Prostate gland (tissue), 2 donors: ENCODE measurements at regions of chr17 and their contacts with region 1.

Region 1: GRCh38 chr17:48024937-48025906 is 12.4 kb downstream of the COPZ2 start:
- DNase-seq: peak; percentile 97
- H3K4me3 ChIP-seq: peak overlapping the region; percentile 20 to 37
- H3K27ac ChIP-seq: peak overlapping the region; percentile 65 to 70
- H3K4me1 ChIP-seq: peaks cover 30% of the 10 kb centered on the region
- H3K27me3 ChIP-seq: no peaks in the 10 kb centered on the region
- CTCF ChIP-seq: peak; percentile 77 to 98 (median 94)
- POLR2A ChIP-seq: peak; percentile 8

Region 2: GRCh38 chr17:48074315-48075081 is 49.3 kb after region 1 on chr17:
- intact Hi-C with region 1: loop called (anchors 1 kb)
- DNase-seq: peak; percentile 79
- H3K4me3 ChIP-seq: no peak overlapping the region
- H3K27ac ChIP-seq: no peak overlapping the region
- H3K4me1 ChIP-seq: no peaks in the 10 kb centered on the region
- H3K27me3 ChIP-seq: no peaks in the 10 kb centered on the region
- CTCF ChIP-seq: peak; percentile 37 to 94 (median 88)
- POLR2A ChIP-seq: no peak

Region 3: GRCh38 chr17:48131216-48131824 is 106.1 kb after region 1 on chr17:
- intact Hi-C with region 1: loop called (anchors 1 kb)
- DNase-seq: peak; percentile 72
- H3K4me3 ChIP-seq: no peak overlapping the region
- H3K27ac ChIP-seq: no peak overlapping the region
- H3K4me1 ChIP-seq: no peaks in the 10 kb centered on the region
- H3K27me3 ChIP-seq: no peaks in the 10 kb centered on the region
- CTCF ChIP-seq: peak; percentile 38 to 87 (median 82)
- POLR2A ChIP-seq: no peak

Region 4: DNA sequence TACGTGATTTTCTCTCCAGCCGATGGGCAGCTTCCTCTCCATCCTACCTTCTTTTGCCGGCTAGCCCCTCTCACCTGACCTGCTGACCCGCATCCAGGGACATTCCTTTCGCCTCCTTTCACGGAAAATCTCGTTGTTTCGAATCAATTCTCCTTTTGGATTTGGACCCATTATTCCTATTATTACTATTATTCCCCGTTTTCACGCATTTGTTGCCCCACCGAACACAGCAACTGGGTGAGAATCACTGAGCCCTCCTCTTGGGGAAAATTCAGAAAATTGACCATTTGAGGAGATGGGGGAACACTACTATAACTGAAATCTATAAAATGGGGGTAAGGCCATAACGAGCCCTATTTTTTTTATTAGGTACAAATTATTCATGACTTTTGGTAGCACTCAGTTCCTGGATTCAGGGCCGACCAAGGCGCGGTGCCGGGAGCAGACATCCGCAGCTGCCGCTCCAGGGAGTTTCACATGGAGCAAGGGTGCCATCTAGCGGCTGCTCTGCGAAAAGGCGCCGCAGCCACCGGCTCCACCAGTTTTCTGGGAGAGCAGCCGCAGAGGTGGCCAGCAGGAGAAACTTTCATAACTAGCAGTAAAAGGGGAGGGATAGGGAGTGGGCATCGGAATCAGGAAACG is 593.2 kb after region 1 on chr17:
- intact Hi-C with region 1: loop called (anchors 5 kb)
- DNase-seq: peak; percentile 87
- H3K4me3 ChIP-seq: peak overlapping the region in 1 of 2 donors; percentile 16
- H3K27ac ChIP-seq: no peak overlapping the region
- H3K4me1 ChIP-seq: peaks cover 8% of the 10 kb centered on the region
- H3K27me3 ChIP-seq: peaks cover 68% of the 10 kb centered on the region
- CTCF ChIP-seq: peak; percentile 91 to 99 (median 96)
- POLR2A ChIP-seq: no peak